PC-3 (cell line): ENCODE measurements at regions of chr13 and their contacts with region 1.

Region 1: DNA sequence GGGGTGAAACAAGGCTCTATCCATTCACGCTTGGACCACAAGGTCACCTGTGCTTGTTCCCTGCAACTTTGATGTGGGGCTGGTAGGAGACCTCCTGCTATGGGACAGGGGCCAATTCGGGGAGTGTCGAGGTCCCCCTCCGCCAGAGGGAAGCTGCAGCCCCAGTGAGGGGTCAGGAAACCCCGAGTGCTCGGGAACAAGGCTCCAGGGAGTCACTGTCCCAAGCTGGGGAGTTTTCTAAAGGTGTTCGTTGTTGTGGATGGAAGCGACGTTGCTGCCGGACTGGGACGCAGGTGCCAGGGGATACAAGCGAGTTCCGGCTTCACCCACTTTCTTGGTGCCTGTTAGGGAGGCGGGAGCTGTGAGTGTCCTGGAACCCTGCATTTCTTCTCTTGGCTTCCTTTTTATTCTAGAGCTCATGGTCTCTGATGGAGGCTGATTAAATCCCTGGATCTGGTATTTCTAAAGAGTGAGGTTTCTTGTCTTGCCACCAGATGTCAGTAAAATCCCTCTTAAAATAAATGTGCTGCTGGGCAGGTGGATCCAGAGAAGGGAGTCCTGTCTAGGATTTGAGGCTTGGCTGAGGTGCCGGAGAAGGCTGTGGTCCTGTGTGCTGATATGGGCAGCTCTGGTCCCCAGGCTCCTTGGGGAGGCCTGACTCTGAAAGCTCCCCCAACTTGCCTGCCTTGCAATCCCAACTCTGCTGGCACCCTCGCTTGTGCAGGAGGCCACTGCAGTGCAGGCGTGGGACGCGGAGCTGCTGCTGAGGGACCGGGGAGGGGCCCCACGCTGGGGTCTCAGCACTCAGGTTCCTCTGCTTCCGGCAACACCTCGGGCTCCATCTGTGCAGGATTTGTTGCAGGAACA is 153.9 kb downstream of the TEX29 start:
- DNase-seq: peak; percentile 55
- ATAC-seq: peak; percentile 74
- H3K4me3 ChIP-seq: no peak overlapping the region
- H3K27ac ChIP-seq: no peak overlapping the region
- H3K4me1 ChIP-seq: no peaks in the 10 kb centered on the region
- H3K27me3 ChIP-seq: peaks cover 45% of the 10 kb centered on the region
- CTCF ChIP-seq: peak; percentile 65

Region 2: GRCh38 chr13:111423168-111423785 is 51.1 kb before region 1 on chr13:
- CTCF ChIA-PET with region 1: no interaction called
- POLR2A ChIA-PET with region 1: no interaction called
- intact Hi-C with region 1: no loop called
- DNase-seq: peak; percentile 62
- ATAC-seq: no peak
- H3K4me3 ChIP-seq: no peak overlapping the region
- H3K27ac ChIP-seq: no peak overlapping the region
- H3K4me1 ChIP-seq: 0 out of 2 replicates have a peak, but pooled peaks cover 5% of the 10 kb centered on the region
- H3K27me3 ChIP-seq: peaks cover 41% of the 10 kb centered on the region
- CTCF ChIP-seq: no peak

Region 3: GRCh38 chr13:112443995-112444860 is 969.9 kb after region 1 on chr13:
- CTCF ChIA-PET with region 1: interaction called, 7 read pairs
- POLR2A ChIA-PET with region 1: no interaction called
- intact Hi-C with region 1: loop called (anchors 1 kb)
- DNase-seq: peak; percentile 72
- ATAC-seq: peak; percentile 89
- H3K4me3 ChIP-seq: no peak overlapping the region
- H3K27ac ChIP-seq: no peak overlapping the region
- H3K4me1 ChIP-seq: no peaks in the 10 kb centered on the region
- H3K27me3 ChIP-seq: peaks cover 33% of the 10 kb centered on the region
- CTCF ChIP-seq: peak; percentile 72

Region 4: GRCh38 chr13:112510002-112510780 is 1035.8 kb after region 1 on chr13:
- CTCF ChIA-PET with region 1: no interaction called
- POLR2A ChIA-PET with region 1: no interaction called
- intact Hi-C with region 1: loop called (anchors 10 kb)
- DNase-seq: peak; percentile 55
- ATAC-seq: peak; percentile 77
- H3K4me3 ChIP-seq: no peak overlapping the region
- H3K27ac ChIP-seq: no peak overlapping the region
- H3K4me1 ChIP-seq: peaks cover 12% of the 10 kb centered on the region; the same call in 1 of the 2 replicates
- H3K27me3 ChIP-seq: no peaks in the 10 kb centered on the region
- CTCF ChIP-seq: peak; percentile 58